CD4-positive, alpha-beta T cell (primary cell): ENCODE measurements at regions of chr15 and their contacts with region 1.

Region 1: GRCh38 chr15:33126559-33127290 is 67.8 kb downstream of the FMN1 start:
- DNase-seq: peak; percentile 33 to 89 (median 71)
- ATAC-seq: peak; percentile 81
- H3K4me3 ChIP-seq: peak overlapping the region; percentile 13
- H3K4me3 Mint-ChIP-seq: peak overlapping the region; percentile 72
- H3K27ac ChIP-seq: no peak overlapping the region
- H3K27ac Mint-ChIP-seq: peak overlapping the region; percentile 76
- H3K4me1 ChIP-seq: peaks cover 13% of the 10 kb centered on the region
- H3K4me1 Mint-ChIP-seq: peaks cover 31% of the 10 kb centered on the region
- H3K27me3 ChIP-seq: no peaks in the 10 kb centered on the region
- H3K27me3 Mint-ChIP-seq: no peaks in the 10 kb centered on the region
- CTCF ChIP-seq: no peak

Region 2: GRCh38 chr15:32717426-32718226 is 409.1 kb before region 1 on chr15 and contains the start of gene GREM1:
- CTCF ChIA-PET with region 1: no interaction called
- POLR2A ChIA-PET with region 1: no interaction called
- intact Hi-C with region 1: no loop called
- DNase-seq: no peak
- ATAC-seq: no peak
- H3K4me3 ChIP-seq: no peak within 1 kb of the TSS
- H3K4me3 Mint-ChIP-seq: no peak within 1 kb of the TSS
- H3K27ac ChIP-seq: no peak within 1 kb of the TSS
- H3K27ac Mint-ChIP-seq: no peak within 1 kb of the TSS
- H3K4me1 ChIP-seq: peaks cover 15% of the 10 kb centered on the region
- H3K4me1 Mint-ChIP-seq: peaks cover 16% of the 10 kb centered on the region
- H3K27me3 ChIP-seq: peaks cover 37 to 72% of the 10 kb centered on the region in 2 experiments
- H3K27me3 Mint-ChIP-seq: peaks cover 81% of the 10 kb centered on the region
- CTCF ChIP-seq: no peak
- total RNA-seq, gene GREM1: not detected

Region 3: DNA sequence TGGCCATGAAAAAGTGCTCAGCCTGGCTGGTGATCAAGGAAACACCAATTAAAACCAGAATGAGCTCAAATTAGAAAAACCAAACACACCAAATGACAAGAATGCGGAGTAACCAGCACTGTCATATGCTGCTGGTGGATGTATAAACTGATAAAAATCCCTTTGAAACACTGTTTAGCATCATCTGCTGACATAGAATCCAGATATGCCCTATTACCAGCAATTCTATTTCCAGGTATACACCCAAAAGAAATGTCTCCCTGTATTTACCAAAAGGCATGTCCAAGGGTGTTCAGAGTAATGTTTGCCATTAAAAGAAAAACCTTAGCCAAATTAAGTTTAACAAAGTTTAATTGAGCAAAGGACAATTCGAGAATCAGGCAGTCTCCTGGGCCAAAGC is 70.8 kb before region 1 on chr15:
- CTCF ChIA-PET with region 1: no interaction called
- POLR2A ChIA-PET with region 1: no interaction called
- intact Hi-C with region 1: no loop called
- DNase-seq: no peak
- ATAC-seq: no peak
- H3K4me3 ChIP-seq: no peak overlapping the region
- H3K4me3 Mint-ChIP-seq: no peak overlapping the region
- H3K27ac ChIP-seq: no peak overlapping the region
- H3K27ac Mint-ChIP-seq: no peak overlapping the region
- H3K4me1 ChIP-seq: no peaks in the 10 kb centered on the region
- H3K4me1 Mint-ChIP-seq: no peaks in the 10 kb centered on the region
- H3K27me3 ChIP-seq: no peaks in the 10 kb centered on the region
- H3K27me3 Mint-ChIP-seq: no peaks in the 10 kb centered on the region
- CTCF ChIP-seq: no peak

Region 4: GRCh38 chr15:33104212-33104611 is 22.5 kb before region 1 on chr15:
- CTCF ChIA-PET with region 1: no interaction called
- POLR2A ChIA-PET with region 1: interaction called, 3 read pairs
- intact Hi-C with region 1: loop called in 1 of 2 experiments (anchors 1 kb)
- DNase-seq: peak in 4 of 14 experiments; percentile 42 to 63 (median 46)
- ATAC-seq: peak; percentile 95
- H3K4me3 ChIP-seq: no peak overlapping the region
- H3K4me3 Mint-ChIP-seq: peak overlapping the region; percentile 59
- H3K27ac ChIP-seq: peak overlapping the region in 1 of 2 donors; percentile 22
- H3K27ac Mint-ChIP-seq: peak overlapping the region; percentile 4
- H3K4me1 ChIP-seq: peaks cover 3% of the 10 kb centered on the region
- H3K4me1 Mint-ChIP-seq: peaks cover 28% of the 10 kb centered on the region
- H3K27me3 ChIP-seq: no peaks in the 10 kb centered on the region
- H3K27me3 Mint-ChIP-seq: no peaks in the 10 kb centered on the region
- CTCF ChIP-seq: no peak

Region 5: DNA sequence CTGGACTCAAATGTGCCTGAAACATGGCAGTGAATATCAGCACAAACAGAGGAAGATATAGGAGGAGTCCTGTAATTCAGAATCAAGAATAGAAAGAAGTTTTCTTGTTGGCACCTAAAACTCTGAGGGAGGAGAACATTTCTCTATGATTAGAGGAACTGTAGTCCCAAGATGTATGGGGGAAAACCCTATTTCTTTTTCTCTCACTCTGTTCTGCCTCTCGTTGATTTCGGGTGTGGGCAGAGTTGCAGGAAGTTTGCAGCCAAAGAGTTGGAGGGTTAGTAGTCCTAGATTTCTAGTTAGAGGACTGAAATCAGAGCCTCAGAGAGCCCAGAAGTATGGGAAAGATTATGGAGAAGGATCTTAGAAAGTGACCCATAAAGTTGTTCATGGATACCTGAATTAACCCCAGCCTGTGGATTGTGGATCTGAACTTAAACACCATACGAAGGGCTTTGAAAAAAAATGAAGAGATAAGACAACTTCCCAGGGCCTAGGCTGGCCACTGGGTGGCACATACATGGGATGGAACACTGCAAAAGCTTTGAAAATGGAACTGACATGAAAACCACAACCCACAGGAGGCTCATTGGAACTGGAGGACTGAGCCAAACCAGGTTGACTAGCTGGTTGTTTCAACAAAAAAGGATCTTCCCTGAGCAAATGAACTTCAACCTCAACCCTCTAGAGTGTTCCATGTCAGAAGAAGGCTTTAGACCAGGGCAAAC is 33.2 kb after region 1 on chr15:
- CTCF ChIA-PET with region 1: no interaction called
- POLR2A ChIA-PET with region 1: no interaction called
- intact Hi-C with region 1: loop called in 1 of 2 experiments (anchors 1 kb)
- DNase-seq: no peak
- ATAC-seq: no peak
- H3K4me3 ChIP-seq: no peak overlapping the region
- H3K4me3 Mint-ChIP-seq: no peak overlapping the region
- H3K27ac ChIP-seq: no peak overlapping the region
- H3K27ac Mint-ChIP-seq: no peak overlapping the region
- H3K4me1 ChIP-seq: no peaks in the 10 kb centered on the region
- H3K4me1 Mint-ChIP-seq: peaks cover 14% of the 10 kb centered on the region
- H3K27me3 ChIP-seq: peaks cover 0 to 2% of the 10 kb centered on the region in 2 experiments
- H3K27me3 Mint-ChIP-seq: peaks cover 11% of the 10 kb centered on the region
- CTCF ChIP-seq: no peak

Region 6: DNA sequence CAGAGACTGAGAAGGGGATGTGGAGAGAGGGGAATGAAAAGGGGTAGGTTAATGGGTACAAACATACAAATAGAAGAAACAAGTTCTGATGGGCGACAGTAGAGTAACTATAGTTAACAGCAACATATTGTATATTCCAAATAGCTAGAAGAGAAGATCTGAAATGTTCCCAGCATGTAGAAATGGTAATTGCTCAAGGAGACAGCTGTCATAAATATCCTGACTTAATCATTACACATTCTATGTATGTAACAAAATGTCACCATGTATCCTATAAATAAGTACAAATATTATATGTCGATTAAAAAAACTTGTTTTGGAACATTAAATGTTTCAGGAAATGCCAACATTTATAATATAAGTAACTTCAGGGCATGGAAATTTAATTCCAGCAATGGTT is 44.5 kb after region 1 on chr15:
- CTCF ChIA-PET with region 1: no interaction called
- POLR2A ChIA-PET with region 1: no interaction called
- intact Hi-C with region 1: no loop called
- DNase-seq: no peak
- ATAC-seq: no peak
- H3K4me3 ChIP-seq: no peak overlapping the region
- H3K4me3 Mint-ChIP-seq: no peak overlapping the region
- H3K27ac ChIP-seq: no peak overlapping the region
- H3K27ac Mint-ChIP-seq: no peak overlapping the region
- H3K4me1 ChIP-seq: no peaks in the 10 kb centered on the region
- H3K4me1 Mint-ChIP-seq: no peaks in the 10 kb centered on the region
- H3K27me3 ChIP-seq: no peaks in the 10 kb centered on the region
- H3K27me3 Mint-ChIP-seq: peaks cover 5% of the 10 kb centered on the region
- CTCF ChIP-seq: no peak

Region 7: GRCh38 chr15:33188641-33189257 is 62.0 kb after region 1 on chr15:
- CTCF ChIA-PET with region 1: no interaction called
- POLR2A ChIA-PET with region 1: no interaction called
- intact Hi-C with region 1: loop called in 1 of 2 experiments (anchors 5 kb)
- DNase-seq: peak in 2 of 14 experiments; percentile 23
- ATAC-seq: no peak
- H3K4me3 ChIP-seq: no peak overlapping the region
- H3K4me3 Mint-ChIP-seq: no peak overlapping the region
- H3K27ac ChIP-seq: no peak overlapping the region
- H3K27ac Mint-ChIP-seq: no peak overlapping the region
- H3K4me1 ChIP-seq: no peaks in the 10 kb centered on the region
- H3K4me1 Mint-ChIP-seq: no peaks in the 10 kb centered on the region
- H3K27me3 ChIP-seq: no peaks in the 10 kb centered on the region
- H3K27me3 Mint-ChIP-seq: peaks cover 11% of the 10 kb centered on the region
- CTCF ChIP-seq: no peak

Region 8: DNA sequence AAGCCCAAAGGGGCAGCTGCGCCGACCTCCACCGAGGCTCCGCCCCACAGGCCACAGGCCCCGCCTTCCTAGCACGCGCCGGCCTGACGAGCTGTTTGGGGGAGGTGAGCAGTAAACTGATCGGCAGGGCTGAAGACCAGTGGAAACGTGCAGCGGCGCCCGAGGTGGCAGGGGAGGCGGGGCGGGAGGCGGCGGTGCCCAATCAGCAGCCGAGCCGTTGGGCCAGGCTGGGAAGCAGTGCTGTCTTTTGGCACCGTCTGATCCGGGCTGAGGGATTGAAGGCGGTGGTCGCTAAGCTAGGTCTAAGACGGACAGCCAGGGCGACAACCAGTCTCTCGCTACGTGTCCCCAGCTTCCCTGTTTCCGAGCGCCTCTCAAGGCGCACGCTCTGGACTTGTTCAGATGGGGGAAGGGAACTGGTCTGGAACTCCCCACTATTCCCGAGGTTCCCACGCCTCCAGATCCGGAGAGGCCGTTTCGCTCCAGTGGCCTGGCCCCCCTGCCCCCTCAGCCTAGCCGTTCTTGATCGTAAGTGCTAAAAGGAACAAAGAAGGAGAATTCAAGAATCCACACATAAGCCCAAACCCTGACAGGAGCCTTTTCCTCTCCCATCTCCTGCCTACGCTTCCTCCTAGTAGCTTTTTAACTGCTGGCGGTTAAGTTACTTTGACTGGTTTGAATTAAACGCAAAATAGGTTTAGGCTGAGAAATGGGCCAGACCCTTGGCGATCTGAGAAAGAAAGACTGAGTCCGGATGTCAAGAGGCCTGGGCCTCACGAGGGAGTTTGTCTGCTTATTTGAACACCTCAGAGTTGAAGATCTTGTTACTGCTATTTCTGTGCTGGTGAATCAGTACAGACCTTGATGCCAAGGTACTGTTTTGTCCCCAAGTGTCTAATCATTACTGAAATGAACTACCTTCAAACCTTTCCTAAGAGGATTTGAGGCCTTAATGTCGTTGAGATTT is 68.3 kb after region 1 on chr15 and contains the start of gene FMN1:
- CTCF ChIA-PET with region 1: no interaction called
- POLR2A ChIA-PET with region 1: no interaction called
- intact Hi-C with region 1: loop called in 1 of 2 experiments (anchors 2 kb)
- DNase-seq: peak; percentile 85 to 94 (median 90)
- ATAC-seq: peak; percentile 100
- H3K4me3 ChIP-seq: peak within 1 kb of the TSS; percentile 74
- H3K4me3 Mint-ChIP-seq: peak within 1 kb of the TSS; percentile 87
- H3K27ac ChIP-seq: peak within 1 kb of the TSS; percentile 14 to 39
- H3K27ac Mint-ChIP-seq: peak within 1 kb of the TSS; percentile 68
- H3K4me1 ChIP-seq: peaks cover 10% of the 10 kb centered on the region
- H3K4me1 Mint-ChIP-seq: peaks cover 14% of the 10 kb centered on the region
- H3K27me3 ChIP-seq: no peaks in the 10 kb centered on the region
- H3K27me3 Mint-ChIP-seq: peaks cover 11% of the 10 kb centered on the region
- CTCF ChIP-seq: no peak
- total RNA-seq, gene FMN1: 0.39 to 0.55 TPM